Naive thymus-derived CD4-positive, alpha-beta T cell (primary cell): ENCODE measurements at regions of chr15 and their contacts with region 1.

Region 1: GRCh38 chr15:64809649-64810496 is 15.6 kb downstream of the PIF1 start:
- DNase-seq: peak; percentile 21 to 75 (median 47)
- ATAC-seq: peak; percentile 80
- H3K4me3 ChIP-seq: no peak overlapping the region
- H3K4me3 Mint-ChIP-seq: no peak overlapping the region
- H3K27ac ChIP-seq: no peak overlapping the region
- H3K27ac Mint-ChIP-seq: no peak overlapping the region
- H3K4me1 ChIP-seq: peaks cover 0 to 3% of the 10 kb centered on the region in 2 donors
- H3K4me1 Mint-ChIP-seq: peaks cover 0 to 8% (median 4%) of the 10 kb centered on the region in 7 donors
- H3K27me3 ChIP-seq: no peaks in the 10 kb centered on the region
- H3K27me3 Mint-ChIP-seq: peaks cover 0 to 12% (median 0%) of the 10 kb centered on the region in 5 donors

Region 2: GRCh38 chr15:64224511-64224910 is 585.4 kb before region 1 on chr15:
- CTCF ChIA-PET with region 1: no interaction called
- POLR2A ChIA-PET with region 1: no interaction called
- intact Hi-C with region 1: no loop called
- DNase-seq: no peak
- ATAC-seq: no peak
- H3K4me3 ChIP-seq: no peak overlapping the region
- H3K4me3 Mint-ChIP-seq: no peak overlapping the region
- H3K27ac ChIP-seq: no peak overlapping the region
- H3K27ac Mint-ChIP-seq: no peak overlapping the region
- H3K4me1 ChIP-seq: no peaks in the 10 kb centered on the region
- H3K4me1 Mint-ChIP-seq: peaks cover 7 to 18% (median 10%) of the 10 kb centered on the region in 7 donors
- H3K27me3 ChIP-seq: no peaks in the 10 kb centered on the region
- H3K27me3 Mint-ChIP-seq: no peaks in the 10 kb centered on the region

Region 3: GRCh38 chr15:64775551-64776401 is 34.1 kb before region 1 on chr15 and contains the start of gene RBPMS2:
- CTCF ChIA-PET with region 1: interaction called, 3 read pairs
- POLR2A ChIA-PET with region 1: no interaction called
- intact Hi-C with region 1: loop called in 1 of 2 experiments (anchors 5 kb)
- DNase-seq: peak in 2 of 9 donors; percentile 8 to 26
- ATAC-seq: peak; percentile 34
- H3K4me3 ChIP-seq: no peak within 1 kb of the TSS
- H3K4me3 Mint-ChIP-seq: peak within 1 kb of the TSS; percentile 45 to 85 (median 74)
- H3K27ac ChIP-seq: no peak within 1 kb of the TSS
- H3K27ac Mint-ChIP-seq: peak within 1 kb of the TSS in 2 of 9 donors; percentile 68 to 70
- H3K4me1 ChIP-seq: peaks cover 0 to 3% of the 10 kb centered on the region in 2 donors
- H3K4me1 Mint-ChIP-seq: peaks cover 0 to 6% (median 0%) of the 10 kb centered on the region in 7 donors
- H3K27me3 ChIP-seq: peaks cover 0 to 12% of the 10 kb centered on the region in 2 donors
- H3K27me3 Mint-ChIP-seq: peaks cover 34 to 77% (median 50%) of the 10 kb centered on the region in 5 donors
- total RNA-seq, gene RBPMS2: 1.2 TPM in 1 of 5 experiments, not detected in the others

Region 4: DNA sequence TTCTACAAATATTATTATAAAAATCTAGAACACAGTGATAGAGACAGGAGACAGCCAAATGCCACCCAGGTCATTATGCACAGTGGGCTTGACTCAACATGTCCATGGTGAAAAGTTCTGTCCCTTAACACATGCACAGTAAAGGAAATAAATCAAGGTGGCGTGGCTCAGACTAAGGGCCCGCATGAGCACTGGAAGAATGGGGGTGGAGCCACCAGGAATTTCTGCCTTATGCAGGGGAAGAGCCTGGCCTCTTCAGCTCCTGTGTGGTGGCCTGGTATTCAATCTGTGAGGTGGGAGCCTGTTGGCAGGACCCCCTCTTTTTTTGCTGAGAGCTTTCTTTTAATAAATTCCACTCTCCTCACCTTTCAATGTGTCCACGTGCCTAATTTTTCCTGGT is 197.0 kb after region 1 on chr15:
- CTCF ChIA-PET with region 1: no interaction called
- POLR2A ChIA-PET with region 1: no interaction called
- intact Hi-C with region 1: no loop called
- DNase-seq: no peak
- ATAC-seq: no peak
- H3K4me3 ChIP-seq: no peak overlapping the region
- H3K4me3 Mint-ChIP-seq: no peak overlapping the region
- H3K27ac ChIP-seq: no peak overlapping the region
- H3K27ac Mint-ChIP-seq: no peak overlapping the region
- H3K4me1 ChIP-seq: no peaks in the 10 kb centered on the region
- H3K4me1 Mint-ChIP-seq: peaks cover 0 to 5% (median 0%) of the 10 kb centered on the region in 7 donors
- H3K27me3 ChIP-seq: no peaks in the 10 kb centered on the region
- H3K27me3 Mint-ChIP-seq: no peaks in the 10 kb centered on the region